CD4-positive, alpha-beta memory T cell (primary cell): ENCODE measurements at regions of chr7 and their contacts with region 1.

Region 1: GRCh38 chr7:35801392-35802101 is 690 bp downstream of the SEPTIN7 start:
- DNase-seq: peak; percentile 79 to 88 (median 81)
- H3K4me3 ChIP-seq: peak overlapping the region; percentile 4 to 67
- H3K4me3 Mint-ChIP-seq: peak overlapping the region; percentile 91 to 96 (median 94)
- H3K27ac ChIP-seq: peak overlapping the region; percentile 95
- H3K27ac Mint-ChIP-seq: peak overlapping the region; percentile 92 to 99 (median 99)
- H3K4me1 ChIP-seq: peaks cover 52% of the 10 kb centered on the region
- H3K4me1 Mint-ChIP-seq: peaks cover 35 to 61% (median 45%) of the 10 kb centered on the region in 4 donors
- H3K27me3 ChIP-seq: no peaks in the 10 kb centered on the region
- H3K27me3 Mint-ChIP-seq: no peaks in the 10 kb centered on the region

Region 2: GRCh38 chr7:35694781-35695472 is 106.6 kb before region 1 on chr7 and contains the start of gene HERPUD2:
- CTCF ChIA-PET with region 1: interaction called, 18 read pairs
- POLR2A ChIA-PET with region 1: interaction called, 196 read pairs
- intact Hi-C with region 1: loop called (anchors 1 kb)
- DNase-seq: peak; percentile 91 to 94 (median 93)
- H3K4me3 ChIP-seq: peak within 1 kb of the TSS; percentile 90 to 98
- H3K4me3 Mint-ChIP-seq: peak within 1 kb of the TSS; percentile 94 to 99 (median 98)
- H3K27ac ChIP-seq: peak within 1 kb of the TSS; percentile 93
- H3K27ac Mint-ChIP-seq: peak within 1 kb of the TSS; percentile 86 to 100 (median 98)
- H3K4me1 ChIP-seq: peaks cover 33% of the 10 kb centered on the region
- H3K4me1 Mint-ChIP-seq: peaks cover 23 to 67% (median 39%) of the 10 kb centered on the region in 4 donors
- H3K27me3 ChIP-seq: no peaks in the 10 kb centered on the region
- H3K27me3 Mint-ChIP-seq: no peaks in the 10 kb centered on the region
- total RNA-seq, gene HERPUD2: 67.3 to 71.8 TPM

Region 3: GRCh38 chr7:35723011-35723410 is 78.5 kb before region 1 on chr7:
- CTCF ChIA-PET with region 1: interaction called, 11 read pairs
- POLR2A ChIA-PET with region 1: interaction called, 55 read pairs
- intact Hi-C with region 1: loop called (anchors 1 kb)
- DNase-seq: peak; percentile 27 to 56 (median 39)
- H3K4me3 ChIP-seq: no peak overlapping the region
- H3K4me3 Mint-ChIP-seq: peak overlapping the region in 1 of 8 donors; percentile 23
- H3K27ac ChIP-seq: no peak overlapping the region
- H3K27ac Mint-ChIP-seq: peak overlapping the region in 6 of 7 donors; percentile 42 to 75 (median 53)
- H3K4me1 ChIP-seq: peaks cover 38% of the 10 kb centered on the region
- H3K4me1 Mint-ChIP-seq: peaks cover 22 to 45% (median 36%) of the 10 kb centered on the region in 4 donors
- H3K27me3 ChIP-seq: no peaks in the 10 kb centered on the region
- H3K27me3 Mint-ChIP-seq: no peaks in the 10 kb centered on the region

Region 4: DNA sequence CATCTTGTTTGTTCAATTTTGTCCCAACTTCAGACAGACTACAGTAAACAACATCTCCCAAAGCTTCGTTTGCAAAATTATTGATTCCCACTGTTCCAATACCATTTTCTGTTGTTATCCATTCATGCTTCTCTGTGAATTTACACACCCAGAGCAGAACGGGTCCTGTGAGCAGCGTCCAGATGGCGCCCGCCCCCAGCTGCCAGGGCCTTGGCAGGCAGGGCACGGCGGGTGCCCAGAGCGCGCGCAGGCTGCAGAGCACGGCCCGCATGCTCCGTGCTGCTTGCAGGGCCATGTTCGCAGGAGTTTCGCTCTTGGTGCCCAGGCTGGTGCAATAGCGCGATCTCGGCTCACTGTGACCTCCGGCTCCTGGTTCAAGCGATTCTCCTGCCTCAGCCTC is 33.2 kb before region 1 on chr7:
- CTCF ChIA-PET with region 1: no interaction called
- POLR2A ChIA-PET with region 1: no interaction called
- intact Hi-C with region 1: no loop called
- DNase-seq: no peak
- H3K4me3 ChIP-seq: no peak overlapping the region
- H3K4me3 Mint-ChIP-seq: no peak overlapping the region
- H3K27ac ChIP-seq: no peak overlapping the region
- H3K27ac Mint-ChIP-seq: no peak overlapping the region
- H3K4me1 ChIP-seq: no peaks in the 10 kb centered on the region
- H3K4me1 Mint-ChIP-seq: no peaks in the 10 kb centered on the region
- H3K27me3 ChIP-seq: no peaks in the 10 kb centered on the region
- H3K27me3 Mint-ChIP-seq: peaks cover 2 to 3% of the 10 kb centered on the region in 2 donors

Region 5: GRCh38 chr7:35825974-35826373 is 24.4 kb after region 1 on chr7:
- CTCF ChIA-PET with region 1: interaction called, 3 read pairs
- POLR2A ChIA-PET with region 1: interaction called, 19 read pairs
- intact Hi-C with region 1: no loop called
- DNase-seq: no peak
- H3K4me3 ChIP-seq: no peak overlapping the region
- H3K4me3 Mint-ChIP-seq: no peak overlapping the region
- H3K27ac ChIP-seq: no peak overlapping the region
- H3K27ac Mint-ChIP-seq: peak overlapping the region in 1 of 7 donors; percentile 9
- H3K4me1 ChIP-seq: peaks cover 70% of the 10 kb centered on the region
- H3K4me1 Mint-ChIP-seq: peaks cover 28 to 38% (median 37%) of the 10 kb centered on the region in 4 donors
- H3K27me3 ChIP-seq: no peaks in the 10 kb centered on the region
- H3K27me3 Mint-ChIP-seq: no peaks in the 10 kb centered on the region

Region 6: DNA sequence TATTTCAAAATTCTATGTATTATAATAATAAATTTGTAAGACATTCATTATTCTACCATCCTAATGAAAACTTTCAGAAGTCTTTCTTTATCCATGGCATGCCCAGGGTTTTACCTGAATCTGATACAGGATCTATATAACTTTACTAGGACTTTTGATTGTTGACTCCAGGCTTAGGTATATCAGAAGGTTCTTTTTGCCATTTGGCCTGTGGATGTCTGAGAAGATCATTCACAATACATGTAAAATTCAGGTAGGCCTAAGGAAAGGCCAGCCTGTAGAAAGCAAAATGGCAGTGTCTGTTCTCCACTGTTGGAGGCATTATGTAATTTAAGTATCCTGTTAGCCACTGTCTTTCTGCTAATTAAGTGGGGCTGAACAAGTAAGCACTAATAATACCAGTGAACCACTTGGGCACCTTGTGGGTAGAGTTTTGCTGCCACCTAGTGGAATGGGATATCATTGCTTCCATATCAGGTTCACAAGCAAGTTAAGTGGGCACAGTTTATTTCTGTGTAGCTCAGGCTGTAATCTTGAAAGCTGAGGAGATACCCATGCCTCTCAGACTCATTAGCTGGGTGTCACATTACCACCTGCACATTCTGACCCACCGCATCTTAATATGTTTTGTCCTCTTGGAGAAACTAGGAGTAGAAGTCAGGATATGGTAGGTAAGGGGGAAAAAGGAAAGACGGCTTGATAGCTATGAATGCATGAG is 104.8 kb after region 1 on chr7:
- CTCF ChIA-PET with region 1: interaction called, 9 read pairs
- POLR2A ChIA-PET with region 1: interaction called, 3 read pairs
- intact Hi-C with region 1: loop called (anchors 2 kb)
- DNase-seq: peak; percentile 70 to 78 (median 73)
- H3K4me3 ChIP-seq: no peak overlapping the region
- H3K4me3 Mint-ChIP-seq: no peak overlapping the region
- H3K27ac ChIP-seq: no peak overlapping the region
- H3K27ac Mint-ChIP-seq: peak overlapping the region in 5 of 7 donors; percentile 2 to 69 (median 36)
- H3K4me1 ChIP-seq: no peaks in the 10 kb centered on the region
- H3K4me1 Mint-ChIP-seq: peaks cover 0 to 6% (median 3%) of the 10 kb centered on the region in 4 donors
- H3K27me3 ChIP-seq: no peaks in the 10 kb centered on the region
- H3K27me3 Mint-ChIP-seq: no peaks in the 10 kb centered on the region

Region 7: GRCh38 chr7:36389371-36390198 is 588.0 kb after region 1 on chr7 and contains the start of gene ANLN:
- CTCF ChIA-PET with region 1: no interaction called
- POLR2A ChIA-PET with region 1: no interaction called
- intact Hi-C with region 1: loop called (anchors 2 kb)
- DNase-seq: peak; percentile 80 to 86 (median 85)
- H3K4me3 ChIP-seq: peak within 1 kb of the TSS; percentile 82 to 84
- H3K4me3 Mint-ChIP-seq: peak within 1 kb of the TSS; percentile 77 to 91 (median 86)
- H3K27ac ChIP-seq: peak within 1 kb of the TSS; percentile 50
- H3K27ac Mint-ChIP-seq: peak within 1 kb of the TSS; percentile 73 to 93 (median 85)
- H3K4me1 ChIP-seq: peaks cover 16% of the 10 kb centered on the region
- H3K4me1 Mint-ChIP-seq: peaks cover 15 to 28% (median 21%) of the 10 kb centered on the region in 4 donors
- H3K27me3 ChIP-seq: no peaks in the 10 kb centered on the region
- H3K27me3 Mint-ChIP-seq: peaks cover 0 to 1% of the 10 kb centered on the region in 2 donors
- total RNA-seq, gene ANLN: 0.23 TPM in 1 of 2 experiments, not detected in the other